Aorta (tissue), 5 donors: ENCODE measurements at regions of chr1 and their contacts with region 1.

Region 1: GRCh38 chr1:194133163-194133562 is 946.8 kb upstream of the B3GALT2 start:
- DNase-seq: no peak
- ATAC-seq: no peak
- H3K4me3 ChIP-seq: no peak overlapping the region
- H3K27ac ChIP-seq: no peak overlapping the region
- H3K4me1 ChIP-seq: no peaks in the 10 kb centered on the region
- H3K27me3 ChIP-seq: no peaks in the 10 kb centered on the region

Region 2: DNA sequence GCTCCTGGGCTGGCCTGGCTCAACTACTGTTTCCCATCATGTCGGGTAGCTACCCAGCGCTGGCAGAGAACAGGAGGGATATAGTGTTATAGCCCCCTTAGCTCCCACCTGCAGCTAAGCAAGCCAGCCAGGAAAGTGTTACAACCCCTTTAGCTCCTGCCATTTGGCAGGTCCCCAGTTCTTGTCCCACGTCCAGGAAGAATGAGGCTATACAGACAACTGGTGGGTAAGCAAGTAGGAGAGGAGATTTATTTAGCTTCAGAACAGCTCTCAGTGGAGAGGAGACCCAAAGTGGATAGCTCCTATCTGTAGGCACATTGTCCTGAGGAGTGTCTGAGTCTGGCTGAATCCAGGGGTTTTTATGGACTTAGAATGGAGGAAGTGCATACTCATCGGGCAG is 205.6 kb before region 1 on chr1:
- intact Hi-C with region 1: loop called in 1 of 2 experiments (anchors 5 kb)
- DNase-seq: no peak
- ATAC-seq: peak; percentile 24
- H3K4me3 ChIP-seq: no peak overlapping the region
- H3K27ac ChIP-seq: no peak overlapping the region
- H3K4me1 ChIP-seq: no peaks in the 10 kb centered on the region
- H3K27me3 ChIP-seq: no peaks in the 10 kb centered on the region